Psoas muscle (tissue), 8 donors: ENCODE measurements at regions of chr20 and their contacts with region 1.

Region 1: GRCh38 chr20:44310664-44311639 is at the start of gene FITM2:
- DNase-seq: peak; percentile 100
- ATAC-seq: peak; percentile 97 to 99 (median 98)
- H3K4me3 ChIP-seq: peak within 1 kb of the TSS; percentile 93
- H3K27ac ChIP-seq: peak within 1 kb of the TSS; percentile 83
- H3K4me1 ChIP-seq: peaks cover 15% of the 10 kb centered on the region
- H3K27me3 ChIP-seq: no peaks in the 10 kb centered on the region
- CTCF ChIP-seq: peak; percentile 96
- total RNA-seq, gene FITM2: 6.0 to 12.2 (median 11.7) TPM

Region 2: GRCh38 chr20:44115762-44116644 is 194.9 kb before region 1 on chr20:
- intact Hi-C with region 1: loop called (anchors 5 kb)
- DNase-seq: no peak
- ATAC-seq: peak; percentile 6 to 27 (median 16)
- H3K4me3 ChIP-seq: no peak overlapping the region
- H3K27ac ChIP-seq: peak overlapping the region; percentile 60
- H3K4me1 ChIP-seq: peaks cover 9% of the 10 kb centered on the region
- H3K27me3 ChIP-seq: no peaks in the 10 kb centered on the region
- CTCF ChIP-seq: no peak

Region 3: DNA sequence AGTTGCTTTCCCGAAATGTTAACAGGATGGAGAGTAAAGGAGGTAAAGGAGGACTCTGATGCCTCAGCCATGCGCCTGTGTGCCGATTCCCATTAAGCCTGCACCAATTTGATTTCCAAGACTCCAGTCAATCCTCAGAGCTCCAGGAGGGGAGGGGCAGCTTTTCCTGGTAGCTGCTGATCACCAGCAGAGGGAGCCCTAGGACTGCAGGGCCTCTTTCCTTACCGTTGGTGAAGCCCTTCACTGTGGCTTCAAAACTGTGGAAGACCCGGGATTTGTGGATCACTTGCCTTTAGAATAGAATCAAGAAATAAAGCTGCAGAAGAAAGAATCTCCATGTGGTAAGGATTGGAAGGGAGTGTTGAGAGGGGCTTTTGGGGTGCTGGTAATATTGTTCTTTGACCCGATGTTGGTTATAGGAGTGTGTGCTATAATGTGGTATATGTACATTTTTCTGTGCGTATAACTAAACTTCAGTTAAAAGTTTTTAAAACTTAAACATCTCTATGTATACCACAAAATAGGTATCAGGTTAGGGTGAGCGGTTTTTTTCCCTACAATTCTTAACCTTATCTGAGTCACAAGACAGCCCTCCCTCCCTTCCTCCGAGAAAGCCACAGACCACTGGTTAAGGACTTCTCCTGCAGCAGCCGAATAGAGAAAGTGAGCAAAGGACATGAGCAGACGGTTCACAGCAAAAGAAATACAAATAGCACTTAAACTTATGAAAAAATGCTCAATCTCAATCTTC is 93.4 kb before region 1 on chr20:
- intact Hi-C with region 1: loop called (anchors 1 to 2 kb)
- DNase-seq: peak; percentile 53 to 78
- ATAC-seq: peak; percentile 85 to 95 (median 90)
- H3K4me3 ChIP-seq: peak overlapping the region; percentile 13
- H3K27ac ChIP-seq: no peak overlapping the region
- H3K4me1 ChIP-seq: peaks cover 7% of the 10 kb centered on the region
- H3K27me3 ChIP-seq: no peaks in the 10 kb centered on the region
- CTCF ChIP-seq: peak; percentile 93